Activated B cell treated with CpG ODN at 0.5 μM for 24 hours (primary cell): ENCODE measurements at regions of chr7 and their contacts with region 1.

Region 1: DNA sequence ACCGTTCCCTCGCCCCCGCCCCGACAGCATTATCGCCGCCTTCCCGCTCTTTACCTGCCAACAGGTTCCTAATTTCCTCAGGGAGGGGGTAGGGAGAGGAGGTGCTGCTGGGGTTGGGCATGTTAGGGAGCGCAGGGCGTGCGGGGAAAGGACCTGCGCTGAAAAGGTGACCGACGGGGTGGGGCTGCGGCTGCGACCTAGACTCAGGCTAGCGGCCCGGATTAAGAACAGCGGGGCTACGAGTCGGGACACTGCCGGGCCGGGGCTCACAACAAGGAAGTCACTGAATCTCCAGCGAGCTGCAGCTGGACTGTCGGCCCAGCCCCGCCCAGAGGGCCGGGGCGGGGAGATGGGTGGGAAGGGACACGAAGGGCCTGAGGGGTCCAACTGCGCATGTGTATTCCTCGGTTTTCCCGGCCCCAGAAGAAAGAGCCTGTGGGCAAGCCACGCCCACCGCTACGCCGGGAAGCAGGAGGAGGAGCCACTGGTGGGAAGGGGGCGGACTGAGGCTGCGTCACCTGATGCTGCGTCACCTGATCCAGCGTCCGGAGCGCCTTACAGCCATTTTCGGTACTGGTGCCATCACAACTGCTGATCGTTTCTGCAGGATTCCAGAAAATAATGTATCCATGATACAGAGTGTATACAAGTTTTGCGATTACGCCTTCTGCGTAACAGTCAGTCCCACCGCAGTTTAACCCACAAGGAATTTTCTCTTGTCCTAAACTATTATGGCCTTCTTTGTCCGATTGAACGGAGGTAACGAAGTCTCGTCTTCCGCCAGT is at the start of gene SKAP2:
- DNase-seq: peak; percentile 92
- ATAC-seq: peak; percentile 84
- H3K4me3 Mint-ChIP-seq: peak within 1 kb of the TSS; percentile 99
- H3K27ac Mint-ChIP-seq: peak within 1 kb of the TSS; percentile 99
- H3K4me1 Mint-ChIP-seq: peaks cover 32% of the 10 kb centered on the region
- H3K27me3 Mint-ChIP-seq: no peaks in the 10 kb centered on the region
- CTCF ChIP-seq: no peak
- total RNA-seq, gene SKAP2: 70.3 and 75.6 TPM in 2 replicates

Region 2: DNA sequence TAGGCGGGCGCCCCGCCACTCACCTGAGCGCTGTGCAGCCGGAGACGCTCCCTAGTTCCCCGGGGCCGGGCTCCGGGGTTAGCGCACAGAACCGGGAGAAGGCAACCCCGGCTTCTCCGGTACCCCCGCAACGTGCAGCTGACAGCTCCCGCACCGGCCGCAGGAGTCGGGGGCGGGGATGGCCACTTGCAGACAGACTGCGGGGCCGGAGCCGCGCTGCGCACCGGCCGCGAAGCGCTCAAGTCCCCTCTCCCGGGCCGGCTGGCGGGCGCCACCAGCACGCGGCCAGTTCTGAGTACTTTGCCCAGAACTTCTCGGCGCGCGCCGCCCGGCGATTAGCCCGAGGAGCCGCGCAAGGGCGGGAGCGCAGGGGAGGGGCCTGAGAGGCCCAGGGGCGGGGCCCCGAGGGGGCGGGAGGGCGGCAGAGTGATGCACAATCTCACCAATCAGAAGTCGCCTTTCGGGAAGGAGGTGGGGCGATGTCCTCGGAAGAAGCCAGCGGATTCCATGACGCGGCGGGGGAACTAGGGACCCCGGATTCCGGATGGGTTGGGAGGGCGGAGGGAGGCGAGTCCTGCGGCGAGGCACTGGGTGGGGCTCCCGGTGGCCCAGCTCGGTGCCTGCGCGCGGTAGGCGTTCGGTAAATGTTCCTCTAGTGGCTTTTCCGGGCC is 1884.5 kb before region 1 on chr7 and contains the start of gene OSBPL3:
- CTCF ChIA-PET with region 1: no interaction called
- POLR2A ChIA-PET with region 1: no interaction called
- intact Hi-C with region 1: loop called (anchors 10 kb)
- DNase-seq: peak; percentile 92
- ATAC-seq: peak; percentile 90
- H3K4me3 Mint-ChIP-seq: peak within 1 kb of the TSS; percentile 98
- H3K27ac Mint-ChIP-seq: peak within 1 kb of the TSS; percentile 94
- H3K4me1 Mint-ChIP-seq: peaks cover 53% of the 10 kb centered on the region
- H3K27me3 Mint-ChIP-seq: no peaks in the 10 kb centered on the region
- CTCF ChIP-seq: no peak
- total RNA-seq, gene OSBPL3: 29.3 and 33.3 TPM in 2 replicates

Region 3: DNA sequence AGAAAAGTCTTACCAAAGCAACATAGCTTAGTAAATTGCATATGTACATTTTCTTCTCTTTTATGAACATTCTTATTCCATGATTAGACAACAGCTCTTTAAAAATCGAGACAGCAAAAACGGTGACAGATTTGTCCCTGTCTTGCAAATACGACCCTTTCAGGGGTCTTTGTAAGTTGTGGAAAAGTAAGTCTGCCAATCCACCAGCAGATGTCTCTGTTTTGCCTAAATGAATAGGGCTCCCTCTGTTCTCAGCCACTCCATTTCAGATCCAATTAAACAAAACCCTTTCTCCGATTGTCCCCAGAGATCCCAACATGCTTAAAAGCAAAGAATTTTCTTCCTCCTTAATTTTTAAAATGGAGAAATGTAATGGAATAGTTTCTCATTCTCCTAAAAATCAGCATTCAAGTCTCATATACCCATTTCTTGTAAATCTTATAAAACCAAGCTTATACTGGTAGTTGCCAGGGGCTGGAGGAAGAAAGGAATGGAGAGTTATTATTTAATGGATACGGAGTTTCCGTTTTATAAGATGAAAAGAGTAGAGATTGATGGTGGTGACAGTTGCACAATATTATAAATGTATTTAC is 773.5 kb before region 1 on chr7:
- CTCF ChIA-PET with region 1: no interaction called
- POLR2A ChIA-PET with region 1: no interaction called
- intact Hi-C with region 1: loop called (anchors 10 kb)
- DNase-seq: no peak
- ATAC-seq: peak; percentile 45
- H3K4me3 Mint-ChIP-seq: peak overlapping the region; percentile 7
- H3K27ac Mint-ChIP-seq: no peak overlapping the region
- H3K4me1 Mint-ChIP-seq: peaks cover 27% of the 10 kb centered on the region
- H3K27me3 Mint-ChIP-seq: no peaks in the 10 kb centered on the region
- CTCF ChIP-seq: peak; percentile 42

Region 4: DNA sequence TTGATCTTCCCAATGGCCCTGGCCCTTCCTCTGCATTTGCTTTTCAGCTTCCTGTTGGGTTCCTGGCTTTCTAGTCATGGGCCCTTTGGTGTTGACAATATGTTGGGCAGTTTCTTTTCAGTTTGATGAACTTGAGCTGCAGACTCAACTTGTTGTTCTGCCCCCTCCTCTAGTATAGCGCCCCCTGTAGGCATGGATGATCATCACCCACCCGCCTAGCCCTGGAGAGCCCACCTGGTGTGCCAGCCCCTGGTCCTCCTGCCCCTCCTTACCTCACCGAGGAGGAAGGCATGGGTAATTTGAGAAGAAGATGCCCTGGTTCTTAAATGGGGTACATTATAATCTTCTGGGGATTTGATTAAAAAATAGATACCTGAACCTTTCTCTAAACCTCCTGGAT is 301.7 kb before region 1 on chr7:
- CTCF ChIA-PET with region 1: no interaction called
- POLR2A ChIA-PET with region 1: no interaction called
- intact Hi-C with region 1: no loop called
- DNase-seq: no peak
- ATAC-seq: no peak
- H3K4me3 Mint-ChIP-seq: no peak overlapping the region
- H3K27ac Mint-ChIP-seq: no peak overlapping the region
- H3K4me1 Mint-ChIP-seq: no peaks in the 10 kb centered on the region
- H3K27me3 Mint-ChIP-seq: peaks cover 33% of the 10 kb centered on the region
- CTCF ChIP-seq: no peak

Region 5: GRCh38 chr7:26853788-26854393 is 10.6 kb before region 1 on chr7:
- CTCF ChIA-PET with region 1: no interaction called
- POLR2A ChIA-PET with region 1: interaction called, 4 read pairs
- intact Hi-C with region 1: loop called (anchors 1 kb)
- DNase-seq: no peak
- ATAC-seq: no peak
- H3K4me3 Mint-ChIP-seq: no peak overlapping the region
- H3K27ac Mint-ChIP-seq: no peak overlapping the region
- H3K4me1 Mint-ChIP-seq: peaks cover 30% of the 10 kb centered on the region
- H3K27me3 Mint-ChIP-seq: no peaks in the 10 kb centered on the region
- CTCF ChIP-seq: no peak

Region 6: DNA sequence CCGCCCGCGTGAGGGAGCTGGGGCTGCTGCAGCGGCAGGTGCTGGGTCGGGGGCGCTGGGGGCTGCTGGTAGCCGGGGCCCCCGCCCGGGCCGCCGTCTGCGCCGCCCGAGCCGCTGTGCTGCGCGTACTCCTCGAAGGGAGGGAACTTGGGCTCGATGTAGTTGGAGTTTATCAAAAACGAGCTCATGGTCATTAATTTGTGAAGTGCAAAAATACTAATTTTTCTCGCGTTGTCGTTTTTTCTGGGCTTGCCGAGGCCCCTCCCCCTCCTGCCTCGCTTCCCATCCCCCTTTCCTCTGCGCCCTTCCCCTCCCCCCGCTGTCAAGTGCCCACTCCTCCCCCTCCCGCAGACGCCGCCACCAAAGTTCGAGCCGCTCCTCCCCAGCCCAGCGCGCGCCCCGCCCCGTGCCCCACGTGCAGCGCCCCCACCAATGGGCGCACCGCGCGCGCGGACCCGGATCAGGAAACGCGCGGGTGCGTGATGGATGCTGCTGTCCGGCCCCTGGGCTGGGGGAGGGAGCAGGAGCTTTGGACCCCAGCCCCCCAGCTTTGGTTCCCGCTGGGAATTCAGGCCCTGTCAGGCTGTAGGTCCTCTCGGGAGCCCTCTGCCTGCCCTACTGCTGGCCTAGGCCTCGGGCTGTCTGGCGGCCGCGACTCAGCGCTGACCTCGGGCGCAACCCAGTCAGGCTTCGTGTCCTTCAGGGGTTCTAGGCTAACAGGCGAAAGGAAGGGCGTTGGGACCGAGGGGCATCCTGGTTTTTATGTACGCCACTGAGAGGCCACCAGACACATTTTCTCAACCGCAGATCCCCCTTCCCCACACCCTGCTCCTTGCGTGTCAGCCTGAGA is 266.3 kb after region 1 on chr7 and contains the start of gene HOXA4:
- CTCF ChIA-PET with region 1: no interaction called
- POLR2A ChIA-PET with region 1: interaction called, 10 read pairs
- intact Hi-C with region 1: loop called (anchors 1 kb)
- DNase-seq: peak; percentile 70
- ATAC-seq: peak; percentile 96
- H3K4me3 Mint-ChIP-seq: peak within 1 kb of the TSS; percentile 76
- H3K27ac Mint-ChIP-seq: no peak within 1 kb of the TSS
- H3K4me1 Mint-ChIP-seq: peaks cover 2% of the 10 kb centered on the region
- H3K27me3 Mint-ChIP-seq: peaks cover 40% of the 10 kb centered on the region
- CTCF ChIP-seq: no peak
- total RNA-seq, gene HOXA4: 0.17 and 0.40 TPM in 2 replicates

Region 7: DNA sequence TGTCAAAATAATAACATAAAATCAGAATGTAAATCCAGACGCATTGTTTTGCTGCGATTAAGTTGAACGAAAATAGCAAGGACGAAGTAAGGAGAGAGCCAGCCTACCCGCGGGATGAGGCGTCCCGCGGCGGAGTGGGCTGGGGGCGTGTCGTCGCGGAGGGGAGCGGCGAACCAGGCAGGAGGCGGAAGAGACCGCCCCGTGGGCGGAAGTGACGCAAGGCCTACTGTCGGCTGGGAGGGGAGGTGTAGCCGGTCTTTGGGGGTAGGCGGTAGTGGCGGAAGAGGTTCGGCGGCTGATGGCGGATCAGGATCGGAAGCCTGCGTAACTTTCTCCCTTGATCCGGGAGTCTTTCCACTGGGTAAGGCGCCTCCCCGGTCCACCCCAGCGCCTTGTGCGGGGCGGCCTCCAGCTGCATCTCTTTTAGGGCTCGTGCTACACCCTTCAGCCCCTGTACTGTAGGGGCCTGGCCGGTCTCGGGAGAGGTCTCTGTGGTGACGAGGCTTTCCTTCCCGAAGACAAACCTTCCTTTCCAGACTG is 875.5 kb after region 1 on chr7 and contains the start of gene TAX1BP1:
- CTCF ChIA-PET with region 1: no interaction called
- POLR2A ChIA-PET with region 1: no interaction called
- intact Hi-C with region 1: loop called (anchors 1 kb)
- DNase-seq: peak; percentile 92
- ATAC-seq: peak; percentile 93
- H3K4me3 Mint-ChIP-seq: peak within 1 kb of the TSS; percentile 95
- H3K27ac Mint-ChIP-seq: peak within 1 kb of the TSS; percentile 96
- H3K4me1 Mint-ChIP-seq: peaks cover 36% of the 10 kb centered on the region
- H3K27me3 Mint-ChIP-seq: no peaks in the 10 kb centered on the region
- CTCF ChIP-seq: no peak
- total RNA-seq, gene TAX1BP1: 61.4 and 64.7 TPM in 2 replicates